ENCODE measurements at regions of chr11 and their contacts with region 1.

Region 1: GRCh38 chr11:122853971-122854446 is 15.7 kb downstream of the CRTAM start:
- DNase-seq: peak; percentile 31
- H3K4me3 ChIP-seq: no peak overlapping the region
- H3K27ac ChIP-seq: no peak overlapping the region
- H3K4me1 ChIP-seq: no peaks in the 10 kb centered on the region
- H3K27me3 ChIP-seq: no peaks in the 10 kb centered on the region
- CTCF ChIP-seq: peak; percentile 65 to 72 (median 69)
- EP300 ChIP-seq: no peak
- POLR2A ChIP-seq: no peak

Region 2: GRCh38 chr11:122523846-122524805 is 329.9 kb before region 1 on chr11:
- in situ Hi-C with region 1: no loop called
- intact Hi-C with region 1: no loop called
- DNase-seq: no peak
- H3K4me3 ChIP-seq: no peak overlapping the region
- H3K27ac ChIP-seq: no peak overlapping the region
- H3K4me1 ChIP-seq: no peaks in the 10 kb centered on the region
- H3K27me3 ChIP-seq: no peaks in the 10 kb centered on the region
- CTCF ChIP-seq: no peak
- EP300 ChIP-seq: no peak
- POLR2A ChIP-seq: no peak

Region 3: DNA sequence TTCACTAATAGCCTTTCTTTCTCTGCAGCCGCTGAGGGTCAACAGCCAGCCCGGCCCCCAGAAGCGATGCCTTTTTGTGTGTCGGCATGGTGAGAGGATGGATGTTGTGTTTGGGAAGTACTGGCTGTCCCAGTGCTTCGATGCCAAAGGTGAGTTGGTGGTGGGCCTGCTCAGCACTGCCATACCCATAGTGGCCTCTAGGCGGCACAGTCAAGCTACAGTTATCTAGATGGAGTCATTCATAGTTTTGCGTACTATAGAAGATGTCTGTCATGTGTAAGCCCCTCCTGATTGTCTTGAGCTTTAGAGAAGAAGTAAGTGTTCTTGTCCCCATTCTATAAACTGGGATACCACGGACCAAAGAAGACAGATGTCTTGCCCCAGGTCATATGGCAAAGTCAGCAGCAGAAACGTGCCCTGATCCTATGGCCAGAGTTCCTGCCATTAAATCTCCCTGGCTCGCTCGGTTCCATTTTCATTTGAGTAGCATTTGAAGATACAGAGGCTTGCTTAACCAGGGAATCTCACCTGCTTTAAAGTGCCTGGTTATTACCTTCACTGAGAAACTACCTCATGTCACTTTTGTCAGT is 57.8 kb before region 1 on chr11:
- in situ Hi-C with region 1: loop called in 2 of 4 experiments (anchors 5 to 10 kb)
- intact Hi-C with region 1: no loop called
- DNase-seq: peak; percentile 54
- H3K4me3 ChIP-seq: no peak overlapping the region
- H3K27ac ChIP-seq: no peak overlapping the region
- H3K4me1 ChIP-seq: no peaks in the 10 kb centered on the region
- H3K27me3 ChIP-seq: no peaks in the 10 kb centered on the region
- CTCF ChIP-seq: peak; percentile 72 to 81 (median 79)
- EP300 ChIP-seq: no peak
- POLR2A ChIP-seq: no peak

Measured in transverse colon (tissue), 4 donors.